BJ (cell line): ENCODE measurements at regions of chr2 and their contacts with region 1.

Region 1: DNA sequence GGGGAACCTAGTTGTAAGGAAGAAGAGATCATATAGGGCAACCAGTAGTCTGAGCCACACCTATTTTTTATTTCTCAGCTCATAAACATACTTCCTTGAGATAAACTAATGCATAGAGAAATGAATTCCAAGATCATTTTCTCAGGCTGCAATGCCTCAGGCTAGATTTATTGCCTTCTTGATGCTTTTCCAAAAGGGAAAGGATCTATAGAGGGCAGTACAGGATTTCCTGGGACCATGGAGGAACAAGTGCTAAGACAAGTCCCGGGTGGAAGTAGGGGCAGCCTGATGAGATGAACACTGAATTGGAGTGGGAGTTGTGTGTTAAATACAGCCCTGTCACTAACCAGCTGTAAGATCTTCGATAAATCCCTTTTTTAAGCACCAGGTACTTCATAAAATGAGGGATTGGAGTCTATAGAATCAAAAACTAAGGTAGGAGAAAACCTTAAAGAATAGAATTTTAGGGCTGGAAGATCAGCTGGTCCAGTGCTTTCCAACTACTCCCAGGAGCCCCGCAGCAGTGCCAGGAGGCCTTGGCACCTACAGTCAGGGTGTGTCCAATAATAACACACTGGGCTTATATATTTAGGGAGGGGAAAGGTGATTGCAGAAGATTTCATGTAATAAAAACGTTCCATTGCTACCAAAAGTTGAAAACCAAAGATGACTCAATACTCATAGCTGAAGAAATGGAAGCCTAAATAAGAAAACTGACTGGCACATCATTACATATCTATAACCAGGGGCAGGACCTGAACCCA is 58.1 kb downstream of the SERTAD2 start:
- DNase-seq: no peak
- H3K4me3 ChIP-seq: no peak overlapping the region
- H3K27me3 ChIP-seq: peaks cover 19% of the 10 kb centered on the region
- CTCF ChIP-seq: no peak; the same call in 1 of the 2 replicates

Region 2: DNA sequence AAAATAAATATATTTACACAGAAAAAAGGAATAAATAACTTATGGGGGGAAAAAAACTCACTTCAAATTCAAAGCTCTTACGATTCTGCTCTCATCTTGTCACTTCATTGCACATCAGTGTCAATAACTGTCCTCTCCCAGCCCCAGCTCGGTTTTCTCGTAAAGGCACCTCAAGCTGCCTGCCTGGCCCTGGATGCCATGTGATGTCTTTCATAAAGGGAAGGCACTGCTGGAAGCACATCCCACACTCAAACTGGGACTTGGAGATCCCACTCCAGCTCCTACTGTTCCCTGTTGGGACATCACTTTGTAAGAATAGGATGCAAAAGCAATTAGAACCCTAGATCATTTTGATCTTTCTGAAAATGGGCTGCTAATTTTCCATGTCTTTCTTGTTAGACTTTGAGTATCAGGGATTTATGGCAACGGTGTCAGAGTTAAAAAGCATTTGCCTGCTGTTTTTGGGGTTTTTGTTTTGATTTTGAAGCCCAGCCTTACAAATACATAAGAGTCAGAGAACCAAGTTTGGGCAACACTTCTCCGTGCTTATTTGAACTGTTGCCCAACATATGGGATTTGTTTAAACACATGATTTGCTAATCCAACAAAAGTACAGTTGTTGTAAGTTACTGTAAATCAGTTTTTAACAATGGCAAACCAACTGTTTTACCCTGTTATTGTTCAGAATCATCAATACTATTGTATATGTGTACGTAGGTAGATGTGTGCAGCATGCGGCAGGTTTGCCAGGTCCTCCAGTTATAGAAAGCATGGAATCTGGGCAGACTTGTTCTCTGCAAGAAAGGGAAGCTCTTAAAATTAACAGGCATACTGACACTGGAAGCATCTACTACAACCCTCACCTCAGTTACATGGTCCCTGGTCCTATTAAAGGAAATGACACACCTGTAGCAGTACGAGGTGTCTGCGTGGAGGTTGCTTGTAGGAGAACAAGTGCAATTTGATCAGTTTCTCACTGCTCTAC is 37.5 kb after region 1 on chr2:
- CTCF ChIA-PET with region 1: interaction called, 3 read pairs
- POLR2A ChIA-PET with region 1: interaction called, 10 read pairs
- DNase-seq: peak; percentile 28
- H3K4me3 ChIP-seq: no peak overlapping the region
- H3K27me3 ChIP-seq: no peaks in the 10 kb centered on the region
- CTCF ChIP-seq: no peak